ENCODE measurements at regions of chr11 and their contacts with region 1.

Region 1: DNA sequence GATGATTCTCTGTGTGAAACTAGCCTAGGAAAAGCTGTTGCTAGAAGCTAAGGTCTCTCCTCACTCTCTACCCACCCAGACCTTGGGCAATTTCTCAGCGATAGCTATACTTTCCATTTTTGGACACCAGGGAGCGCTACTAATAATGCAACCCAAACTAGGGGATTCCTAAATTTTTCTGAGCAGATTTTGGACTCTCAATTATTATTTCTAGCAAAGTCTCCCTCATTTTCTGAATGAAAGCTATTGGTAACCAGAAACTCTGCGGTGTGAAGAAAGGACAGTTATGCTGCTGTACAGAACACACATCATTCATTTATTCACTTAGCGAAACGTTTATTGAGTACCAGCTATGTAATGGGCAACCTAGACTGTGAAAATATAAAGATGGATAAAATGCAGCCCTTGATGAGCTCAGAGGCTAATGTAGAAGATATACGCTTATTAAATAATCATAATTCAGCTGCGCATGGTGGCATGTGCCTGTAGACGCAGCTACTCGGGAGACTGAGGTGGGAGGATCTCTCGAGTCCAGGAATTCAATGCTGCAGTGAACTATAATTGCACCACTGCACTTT is 6.1 kb upstream of the STIM1 start:
- DNase-seq: peak; percentile 42
- H3K4me3 Mint-ChIP-seq: no peak overlapping the region
- H3K27ac Mint-ChIP-seq: peak overlapping the region; percentile 34
- H3K4me1 Mint-ChIP-seq: peaks cover 37% of the 10 kb centered on the region
- H3K27me3 Mint-ChIP-seq: no peaks in the 10 kb centered on the region

Region 2: DNA sequence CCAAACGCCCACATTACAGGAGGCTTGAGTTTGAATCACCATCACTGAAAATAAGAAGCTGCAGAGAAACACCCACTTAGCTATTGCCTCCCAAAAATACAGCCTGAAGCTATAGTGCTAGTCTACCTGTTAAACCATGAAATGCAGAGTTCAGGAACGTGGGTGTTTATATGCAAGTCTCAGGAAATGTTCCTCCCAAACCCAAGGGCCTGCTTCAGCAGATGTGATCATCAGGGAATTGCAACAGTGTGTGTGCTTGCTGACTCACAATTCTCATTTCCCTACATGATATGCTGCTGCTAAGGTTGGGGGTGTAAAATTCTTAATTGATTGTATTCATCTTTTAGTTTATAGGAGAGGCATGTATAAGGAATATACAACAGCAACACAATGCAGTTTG is 101.7 kb before region 1 on chr11:
- CTCF ChIA-PET with region 1: no interaction called
- POLR2A ChIA-PET with region 1: no interaction called
- intact Hi-C with region 1: no loop called
- DNase-seq: no peak
- H3K4me3 Mint-ChIP-seq: no peak overlapping the region
- H3K27ac Mint-ChIP-seq: peak overlapping the region; percentile 54
- H3K4me1 Mint-ChIP-seq: peaks cover 13% of the 10 kb centered on the region
- H3K27me3 Mint-ChIP-seq: no peaks in the 10 kb centered on the region

Region 3: DNA sequence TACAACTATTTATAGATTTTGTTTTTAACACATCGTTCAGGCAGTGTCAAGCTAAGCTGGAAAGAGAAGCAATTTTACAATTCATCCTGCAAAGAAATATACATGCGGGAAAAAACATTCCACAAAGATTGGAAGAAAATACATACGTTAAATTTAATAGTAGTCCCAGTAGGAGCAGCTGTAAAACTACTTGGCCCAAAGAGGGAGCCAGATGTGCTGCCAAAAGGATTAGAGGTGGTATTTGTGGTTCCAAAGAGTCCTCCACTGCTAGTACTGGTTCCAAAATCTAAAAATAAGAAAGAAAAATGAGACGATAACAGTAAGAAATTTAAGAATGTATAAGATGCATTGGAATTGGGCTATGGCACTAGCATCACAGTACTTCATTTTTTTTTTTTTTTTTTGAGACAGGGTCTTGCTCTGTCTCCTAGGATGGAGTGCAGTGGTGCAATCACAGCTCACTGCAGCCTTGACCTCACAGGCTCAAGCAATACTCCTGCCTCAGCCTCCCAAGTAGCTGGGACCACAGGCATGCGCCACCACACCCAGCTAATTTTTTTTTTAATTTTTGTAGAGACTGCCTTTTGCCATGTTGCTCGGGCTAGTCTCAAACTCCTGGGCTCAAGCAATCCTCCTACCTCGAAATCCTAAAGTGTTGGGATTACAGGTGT is 73.5 kb before region 1 on chr11:
- CTCF ChIA-PET with region 1: no interaction called
- POLR2A ChIA-PET with region 1: no interaction called
- intact Hi-C with region 1: no loop called
- DNase-seq: no peak
- H3K4me3 Mint-ChIP-seq: no peak overlapping the region
- H3K27ac Mint-ChIP-seq: no peak overlapping the region
- H3K4me1 Mint-ChIP-seq: peaks cover 3% of the 10 kb centered on the region
- H3K27me3 Mint-ChIP-seq: no peaks in the 10 kb centered on the region

Region 4: GRCh38 chr11:3867209-3868091 is 18.1 kb after region 1 on chr11:
- CTCF ChIA-PET with region 1: interaction called, 58 read pairs
- POLR2A ChIA-PET with region 1: interaction called, 15 read pairs
- intact Hi-C with region 1: loop called (anchors 2 kb)
- DNase-seq: peak; percentile 68
- H3K4me3 Mint-ChIP-seq: no peak overlapping the region
- H3K27ac Mint-ChIP-seq: peak overlapping the region; percentile 87
- H3K4me1 Mint-ChIP-seq: peaks cover 71% of the 10 kb centered on the region
- H3K27me3 Mint-ChIP-seq: no peaks in the 10 kb centered on the region

Region 5: DNA sequence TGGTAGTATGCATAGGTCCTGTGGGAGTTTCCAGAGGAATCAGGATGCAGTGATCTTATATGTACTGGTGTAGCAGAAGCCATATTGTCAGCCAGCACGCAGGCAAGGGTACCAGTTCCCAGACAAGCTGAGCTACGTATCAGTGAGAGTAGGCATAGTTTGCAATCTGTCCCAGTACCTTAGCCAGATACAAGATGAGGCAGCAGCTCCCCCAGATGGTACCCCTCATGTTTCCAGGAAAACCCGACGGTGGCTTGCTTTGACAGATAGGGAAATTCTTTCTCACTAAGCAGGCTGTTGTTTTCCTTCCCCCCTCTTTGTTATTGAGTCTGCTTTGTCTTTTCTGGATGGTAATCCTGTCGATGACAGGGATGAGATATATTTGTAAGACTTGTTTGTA is 135.5 kb after region 1 on chr11:
- CTCF ChIA-PET with region 1: interaction called, 23 read pairs
- POLR2A ChIA-PET with region 1: interaction called, 3 read pairs
- intact Hi-C with region 1: loop called (anchors 1 kb)
- DNase-seq: peak; percentile 69
- H3K4me3 Mint-ChIP-seq: no peak overlapping the region
- H3K27ac Mint-ChIP-seq: peak overlapping the region; percentile 18
- H3K4me1 Mint-ChIP-seq: peaks cover 73% of the 10 kb centered on the region
- H3K27me3 Mint-ChIP-seq: no peaks in the 10 kb centered on the region

Region 6: GRCh38 chr11:4156571-4156970 is 307.2 kb after region 1 on chr11:
- CTCF ChIA-PET with region 1: no interaction called
- POLR2A ChIA-PET with region 1: no interaction called
- intact Hi-C with region 1: no loop called
- DNase-seq: no peak
- H3K4me3 Mint-ChIP-seq: no peak overlapping the region
- H3K27ac Mint-ChIP-seq: no peak overlapping the region
- H3K4me1 Mint-ChIP-seq: no peaks in the 10 kb centered on the region
- H3K27me3 Mint-ChIP-seq: no peaks in the 10 kb centered on the region